WTC11 (cell line): ENCODE measurements at regions of chr17 and their contacts with region 1.

Region 1: DNA sequence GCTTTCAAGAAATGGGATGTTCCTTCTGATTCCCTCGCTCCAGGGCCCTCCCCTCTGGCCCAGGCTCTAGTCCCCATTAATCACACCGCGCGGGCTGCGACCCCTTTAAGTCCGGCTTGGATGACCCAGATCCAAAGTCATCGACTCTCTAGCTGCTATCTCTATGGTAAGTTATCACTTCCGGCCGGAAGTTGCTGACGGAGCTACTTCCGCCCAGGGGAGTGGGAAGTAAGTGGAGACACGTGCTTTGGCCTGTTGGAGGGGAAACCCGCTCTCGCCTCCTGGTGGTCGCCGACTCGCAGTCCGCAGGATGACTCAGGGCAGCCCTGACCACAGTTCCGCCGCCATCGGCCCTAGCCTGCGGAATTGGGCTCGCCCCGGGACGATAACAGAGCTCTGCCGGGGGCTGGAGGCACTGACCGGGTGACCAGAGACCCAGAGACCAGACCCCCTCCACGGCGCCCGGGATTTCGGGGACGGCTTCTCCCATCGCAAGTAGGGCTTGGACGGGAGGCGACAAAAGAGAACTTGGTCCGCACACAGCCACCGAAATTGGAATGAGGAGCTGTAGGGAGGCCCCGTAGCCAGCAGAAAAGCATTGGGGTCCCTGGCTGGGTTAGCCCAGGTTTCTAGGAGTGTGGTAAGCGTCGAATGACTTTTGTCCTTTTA is 52.2 kb upstream of the SEC14L1 start:
- DNase-seq: peak; percentile 92
- ATAC-seq: peak; percentile 88
- H3K4me3 Mint-ChIP-seq: peak overlapping the region; percentile 92
- H3K27ac Mint-ChIP-seq: peak overlapping the region; percentile 95
- H3K4me1 Mint-ChIP-seq: peaks cover 26% of the 10 kb centered on the region
- H3K27me3 Mint-ChIP-seq: no peaks in the 10 kb centered on the region
- CTCF ChIP-seq: no peak

Region 2: GRCh38 chr17:77101521-77102410 is 13.2 kb after region 1 on chr17:
- CTCF ChIA-PET with region 1: interaction called, 15 read pairs
- POLR2A ChIA-PET with region 1: interaction called, 3 read pairs
- DNase-seq: no peak
- ATAC-seq: no peak
- H3K4me3 Mint-ChIP-seq: no peak overlapping the region
- H3K27ac Mint-ChIP-seq: peak overlapping the region; percentile 49
- H3K4me1 Mint-ChIP-seq: peaks cover 56% of the 10 kb centered on the region
- H3K27me3 Mint-ChIP-seq: no peaks in the 10 kb centered on the region
- CTCF ChIP-seq: no peak

Region 3: DNA sequence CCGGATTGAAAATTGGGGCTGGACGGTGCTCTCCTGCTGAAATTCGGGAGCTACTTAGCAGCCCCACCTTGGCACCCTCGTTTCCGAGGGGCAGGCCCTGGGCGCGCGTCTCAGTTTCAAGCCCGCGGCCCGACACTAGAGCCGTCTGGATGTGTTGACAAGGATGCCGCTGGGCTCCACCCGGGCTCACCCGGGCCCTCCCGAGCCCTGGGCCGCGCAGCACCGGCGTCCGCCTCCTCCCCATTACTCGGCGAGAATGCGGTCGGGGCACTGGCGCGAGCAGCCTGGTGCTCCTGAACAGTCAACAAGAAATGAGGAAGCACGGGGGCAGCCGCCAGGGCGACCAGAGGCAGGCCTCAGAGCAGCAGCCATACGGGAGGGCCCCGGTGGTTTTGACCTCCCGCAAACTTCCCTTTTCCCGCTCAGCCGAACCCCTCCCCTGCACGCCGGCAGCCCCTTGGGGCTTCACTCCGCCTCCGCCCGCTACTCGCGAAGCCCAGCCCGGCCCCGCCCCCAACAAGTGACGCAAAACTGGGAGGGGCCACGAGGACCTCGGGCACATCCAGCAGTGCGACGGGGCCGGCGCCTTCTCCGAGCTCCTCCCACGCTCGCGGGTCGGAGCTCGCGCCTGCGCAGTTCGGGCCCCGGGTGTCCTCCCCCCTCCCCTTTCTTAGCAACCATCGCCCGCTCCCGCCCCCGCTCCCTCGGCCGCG is 51.7 kb after region 1 on chr17:
- CTCF ChIA-PET with region 1: interaction called, 18 read pairs
- POLR2A ChIA-PET with region 1: interaction called, 3 read pairs
- DNase-seq: peak; percentile 100
- ATAC-seq: peak; percentile 96
- H3K4me3 Mint-ChIP-seq: peak overlapping the region; percentile 55
- H3K27ac Mint-ChIP-seq: peak overlapping the region; percentile 91
- H3K4me1 Mint-ChIP-seq: peaks cover 16% of the 10 kb centered on the region
- H3K27me3 Mint-ChIP-seq: no peaks in the 10 kb centered on the region; the same call in 1 of the 2 replicates
- CTCF ChIP-seq: no peak

Region 4: GRCh38 chr17:77247048-77247541 is 158.5 kb after region 1 on chr17:
- CTCF ChIA-PET with region 1: interaction called, 10 read pairs
- POLR2A ChIA-PET with region 1: no interaction called
- DNase-seq: peak; percentile 95
- ATAC-seq: peak; percentile 92
- H3K4me3 Mint-ChIP-seq: peak overlapping the region; percentile 70
- H3K27ac Mint-ChIP-seq: no peak overlapping the region
- H3K4me1 Mint-ChIP-seq: peaks cover 8% of the 10 kb centered on the region; the same call in 1 of the 2 replicates
- H3K27me3 Mint-ChIP-seq: peaks cover 23% of the 10 kb centered on the region
- CTCF ChIP-seq: peak; percentile 99